HCT116 (cell line): ENCODE measurements at regions of chr19 and their contacts with region 1.

Region 1: DNA sequence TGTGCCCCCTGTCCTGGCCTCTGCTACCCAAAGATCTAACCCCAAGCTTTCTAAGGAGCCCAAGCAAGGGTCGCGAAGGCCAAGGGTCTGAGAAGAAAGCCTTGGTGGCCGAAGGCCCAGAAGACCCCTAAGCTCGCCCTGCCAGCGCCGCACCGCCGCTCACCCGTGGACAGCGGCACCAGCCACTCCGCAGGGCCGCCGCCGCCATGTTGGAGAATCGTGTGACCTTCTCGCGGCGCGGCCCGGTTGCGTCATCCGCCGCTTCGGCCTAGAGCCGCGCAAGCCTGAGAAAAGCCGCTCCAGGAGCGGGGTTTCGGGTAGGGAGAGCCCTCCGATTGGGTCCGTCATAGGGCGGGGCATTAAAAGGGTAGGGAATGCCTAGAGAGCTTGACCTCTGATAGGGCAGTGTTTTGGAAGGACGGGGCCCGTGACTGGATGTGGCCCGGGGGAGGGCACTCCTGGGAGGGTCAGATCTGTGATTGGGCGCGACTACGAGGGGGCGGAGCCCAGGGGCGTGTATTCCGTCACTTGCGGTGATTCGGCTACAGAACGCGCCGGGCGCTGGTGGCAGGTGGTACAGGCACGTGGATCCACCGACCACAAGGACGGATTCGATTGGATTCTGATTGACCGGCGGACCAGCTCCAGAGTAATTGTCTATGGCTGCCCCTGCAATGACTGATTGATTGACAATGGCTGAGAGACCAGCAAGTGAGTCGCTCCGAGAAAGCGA is at the start of gene TIMM44:
- DNase-seq: peak; percentile 99
- ATAC-seq: peak; percentile 98
- H3K4me3 ChIP-seq: peak within 1 kb of the TSS; percentile 96 to 99
- H3K27ac ChIP-seq: peak within 1 kb of the TSS; percentile 77
- H3K4me1 ChIP-seq: peaks cover 13 to 25% of the 10 kb centered on the region in 2 experiments
- H3K27me3 ChIP-seq: no peaks in the 10 kb centered on the region
- CTCF ChIP-seq: no peak
- POLR2A ChIP-seq: peak; percentile 95
- RAD21 ChIP-seq: no peak
- total RNA-seq, gene TIMM44: 136 TPM

Region 2: DNA sequence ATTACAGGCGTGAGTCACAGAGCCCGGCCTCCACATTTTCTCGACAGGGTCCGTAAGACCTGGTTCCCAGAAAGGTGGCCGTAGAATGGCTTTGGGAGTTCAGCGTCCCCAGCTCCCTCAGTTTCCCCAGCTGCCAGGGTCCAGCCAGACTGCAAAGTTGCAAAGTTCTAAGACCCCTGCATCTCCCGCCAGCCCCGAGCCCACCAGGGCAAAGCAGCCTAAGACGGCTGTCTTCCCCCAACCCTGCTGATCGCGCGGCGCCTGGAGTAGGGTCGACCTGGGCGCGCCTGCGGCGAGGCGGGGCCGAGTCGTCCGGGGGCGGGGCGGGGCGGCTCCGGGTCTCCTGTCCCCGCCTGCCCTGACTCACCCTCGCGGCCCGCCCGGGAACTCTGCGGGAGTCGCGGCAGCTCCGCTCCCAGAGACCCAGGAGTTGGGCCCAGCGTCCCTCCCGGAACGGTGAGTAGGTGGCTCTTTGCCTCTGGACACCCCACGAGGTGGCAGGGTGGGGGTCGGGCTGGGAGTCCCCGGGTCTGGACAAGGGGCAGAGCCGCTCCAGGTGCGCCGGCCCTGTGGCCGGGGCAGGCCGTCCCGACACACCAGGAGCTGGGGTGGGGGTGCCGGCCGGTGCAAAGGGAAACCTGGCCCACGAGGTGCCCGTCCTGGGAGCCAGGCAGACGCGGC is 55.3 kb before region 1 on chr19 and contains the start of gene LRRC8E:
- CTCF ChIA-PET with region 1: no interaction called
- POLR2A ChIA-PET with region 1: no interaction called
- RAD21 ChIA-PET with region 1: no interaction called
- intact Hi-C with region 1: no loop called
- DNase-seq: no peak
- ATAC-seq: peak; percentile 98
- H3K4me3 ChIP-seq: peak within 1 kb of the TSS; percentile 81 to 94
- H3K27ac ChIP-seq: peak within 1 kb of the TSS; percentile 76
- H3K4me1 ChIP-seq: peaks cover 13 to 42% of the 10 kb centered on the region in 2 experiments; a peak in 3 of 4 replicates
- H3K27me3 ChIP-seq: no peaks in the 10 kb centered on the region
- CTCF ChIP-seq: no peak
- POLR2A ChIP-seq: no peak
- RAD21 ChIP-seq: no peak
- total RNA-seq, gene LRRC8E: 18.1 TPM

Region 3: GRCh38 chr19:7919610-7920518 is 23.7 kb before region 1 on chr19 and contains the start of gene SNAPC2:
- CTCF ChIA-PET with region 1: interaction called, 30 read pairs
- POLR2A ChIA-PET with region 1: interaction called, 23 read pairs
- RAD21 ChIA-PET with region 1: interaction called in 1 of 2 experiments, 4 read pairs
- intact Hi-C with region 1: no loop called
- DNase-seq: peak; percentile 92
- ATAC-seq: peak; percentile 61
- H3K4me3 ChIP-seq: peak within 1 kb of the TSS; percentile 66 to 74
- H3K27ac ChIP-seq: peak within 1 kb of the TSS; percentile 89
- H3K4me1 ChIP-seq: peaks cover 21 to 61% of the 10 kb centered on the region in 2 experiments; a peak in 3 of 4 replicates
- H3K27me3 ChIP-seq: no peaks in the 10 kb centered on the region
- CTCF ChIP-seq: no peak
- POLR2A ChIP-seq: no peak
- RAD21 ChIP-seq: no peak
- total RNA-seq, gene SNAPC2: 42.9 TPM

Region 4: GRCh38 chr19:7928736-7929701 is 14.6 kb before region 1 on chr19:
- CTCF ChIA-PET with region 1: interaction called, 6 read pairs
- POLR2A ChIA-PET with region 1: interaction called, 17 read pairs
- RAD21 ChIA-PET with region 1: no interaction called
- intact Hi-C with region 1: no loop called
- DNase-seq: no peak
- ATAC-seq: peak; percentile 27
- H3K4me3 ChIP-seq: no peak overlapping the region
- H3K27ac ChIP-seq: peak overlapping the region; percentile 57
- H3K4me1 ChIP-seq: peaks cover 22 to 52% of the 10 kb centered on the region in 2 experiments
- H3K27me3 ChIP-seq: no peaks in the 10 kb centered on the region
- CTCF ChIP-seq: peak in 2 of 3 experiments; percentile 57 to 70; a peak in 4 of 6 replicates
- POLR2A ChIP-seq: no peak
- RAD21 ChIP-seq: no peak

Region 5: DNA sequence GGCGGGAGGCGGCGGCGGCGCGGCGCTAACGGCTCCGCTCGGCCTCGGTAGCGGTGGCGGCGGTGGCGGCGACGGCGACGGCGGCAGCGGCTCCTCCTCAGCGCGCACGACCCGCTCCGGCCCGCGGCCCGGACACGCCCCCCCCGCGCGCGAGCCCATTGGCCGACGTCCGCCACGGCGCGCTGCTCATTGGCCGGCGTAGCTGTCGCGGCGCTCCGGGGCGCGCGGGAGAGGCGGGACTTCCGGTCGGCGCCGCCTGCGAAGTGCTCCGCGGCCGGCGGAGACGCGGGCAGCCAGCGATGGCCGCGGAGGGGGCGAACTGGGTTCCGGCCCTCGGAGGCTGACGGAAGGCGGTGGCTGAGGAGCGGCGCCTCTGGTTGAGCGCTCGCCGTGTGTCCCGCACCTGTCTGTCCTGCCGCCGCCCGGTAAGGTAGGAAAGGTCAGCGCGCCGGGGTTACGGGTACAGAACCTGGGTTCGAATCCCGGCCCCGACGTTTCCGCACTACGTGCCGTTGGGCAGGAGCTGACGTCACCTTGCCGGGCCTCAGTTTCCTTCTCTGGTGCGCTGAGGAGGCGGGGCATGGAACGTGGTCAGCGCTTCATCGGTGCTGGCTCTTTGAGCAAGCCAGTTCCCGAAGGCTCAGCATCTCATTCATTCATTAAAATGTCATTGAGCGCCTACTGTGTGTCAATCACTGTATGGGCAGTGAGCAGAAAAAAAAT is 62.1 kb after region 1 on chr19 and contains the start of gene ELAVL1:
- CTCF ChIA-PET with region 1: interaction called, 14 read pairs
- POLR2A ChIA-PET with region 1: interaction called, 7 read pairs
- RAD21 ChIA-PET with region 1: no interaction called
- intact Hi-C with region 1: no loop called
- DNase-seq: peak; percentile 73
- ATAC-seq: peak; percentile 83
- H3K4me3 ChIP-seq: peak within 1 kb of the TSS; percentile 87 to 96
- H3K27ac ChIP-seq: peak within 1 kb of the TSS; percentile 68
- H3K4me1 ChIP-seq: peaks cover 21 to 40% of the 10 kb centered on the region in 2 experiments
- H3K27me3 ChIP-seq: no peaks in the 10 kb centered on the region
- CTCF ChIP-seq: no peak
- POLR2A ChIP-seq: peak; percentile 35
- RAD21 ChIP-seq: no peak
- total RNA-seq, gene ELAVL1: 134 TPM

Region 6: DNA sequence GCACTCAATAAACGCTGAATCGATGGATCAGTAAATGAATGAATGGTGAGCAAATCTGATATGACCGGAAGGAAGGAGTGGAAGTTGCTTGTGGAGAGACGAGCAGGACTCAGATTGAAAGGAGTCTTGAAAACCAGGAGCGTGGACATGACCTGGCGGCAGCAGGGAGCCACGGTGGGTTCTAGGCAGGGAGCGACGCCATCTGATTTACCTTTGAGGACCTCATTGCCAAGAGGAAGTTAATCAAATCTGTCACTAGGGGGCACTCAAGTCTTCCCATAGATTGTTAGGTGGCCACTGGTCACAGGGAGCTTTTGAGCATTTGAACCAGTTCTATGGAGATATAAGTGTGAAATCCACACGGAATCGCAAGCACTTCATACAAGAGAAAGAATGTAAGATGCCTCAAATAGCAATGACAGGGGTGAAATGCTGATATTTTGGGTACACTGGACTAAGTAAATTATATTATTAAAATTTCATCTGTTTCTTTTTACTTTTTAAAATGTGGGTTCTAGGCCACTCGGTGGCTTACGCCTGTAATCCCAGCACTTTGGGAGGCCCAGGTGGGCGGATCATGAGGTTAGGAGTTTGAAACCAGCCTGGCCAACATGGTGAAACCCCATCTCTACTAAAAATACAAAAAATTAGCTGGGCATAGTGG is 214.9 kb after region 1 on chr19:
- CTCF ChIA-PET with region 1: interaction called, 12 read pairs
- POLR2A ChIA-PET with region 1: interaction called, 6 read pairs
- RAD21 ChIA-PET with region 1: interaction called in 1 of 2 experiments, 3 read pairs
- intact Hi-C with region 1: loop called (anchors 5 kb)
- DNase-seq: peak; percentile 79
- ATAC-seq: peak; percentile 47
- H3K4me3 ChIP-seq: no peak overlapping the region
- H3K27ac ChIP-seq: no peak overlapping the region
- H3K4me1 ChIP-seq: peaks cover 27 to 28% of the 10 kb centered on the region in 2 experiments
- H3K27me3 ChIP-seq: no peaks in the 10 kb centered on the region
- CTCF ChIP-seq: peak; percentile 63 to 93 (median 77)
- POLR2A ChIP-seq: no peak
- RAD21 ChIP-seq: peak; percentile 92